ENCODE measurements at regions of chr1 and their contacts with region 1.

Region 1: GRCh38 chr1:167066333-167067122 is 23.6 kb downstream of the GPA33 start:
- DNase-seq: peak; percentile 59 to 92 (median 80)
- ATAC-seq: peak; percentile 99
- H3K4me3 ChIP-seq: peak overlapping the region in 1 of 2 experiments; percentile 27
- H3K4me3 Mint-ChIP-seq: no peak overlapping the region
- H3K27ac ChIP-seq: no peak overlapping the region
- H3K27ac Mint-ChIP-seq: no peak overlapping the region
- H3K4me1 ChIP-seq: no peaks in the 10 kb centered on the region
- H3K4me1 Mint-ChIP-seq: no peaks in the 10 kb centered on the region
- H3K27me3 ChIP-seq: no peaks in the 10 kb centered on the region
- H3K27me3 Mint-ChIP-seq: no peaks in the 10 kb centered on the region
- CTCF ChIP-seq: peak; percentile 96

Region 2: DNA sequence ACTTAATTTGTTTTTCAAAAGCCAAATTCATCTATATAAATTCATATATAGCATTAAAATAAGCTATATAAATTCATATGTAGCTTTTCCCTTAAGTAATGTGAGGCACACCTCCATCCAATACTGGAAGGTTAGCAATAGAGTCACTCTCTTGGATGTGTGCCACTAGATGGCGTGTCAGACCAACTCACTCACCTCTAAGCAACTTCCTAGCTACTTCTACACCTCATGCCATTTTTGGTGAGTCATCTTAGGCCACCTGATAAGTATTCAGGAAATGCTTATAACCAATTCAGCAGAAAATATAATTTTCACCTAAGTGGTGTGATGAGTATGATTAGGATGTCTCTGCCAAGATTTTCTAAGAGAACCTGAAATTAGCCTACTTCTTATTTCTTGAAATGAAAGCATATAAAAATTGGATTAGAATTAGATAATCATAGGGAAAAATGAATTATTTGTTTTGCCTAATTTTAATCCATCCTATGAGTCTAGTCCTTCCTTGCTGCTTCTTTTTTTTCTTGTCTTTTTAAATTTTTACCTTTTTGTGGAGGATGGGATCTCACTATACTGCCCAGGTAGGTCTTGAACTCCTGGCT is 156.0 kb before region 1 on chr1:
- CTCF ChIA-PET with region 1: interaction called, 718 read pairs
- POLR2A ChIA-PET with region 1: interaction called, 27 read pairs
- intact Hi-C with region 1: no loop called
- DNase-seq: peak; percentile 44 to 92 (median 75)
- ATAC-seq: peak; percentile 100
- H3K4me3 ChIP-seq: no peak overlapping the region
- H3K4me3 Mint-ChIP-seq: no peak overlapping the region
- H3K27ac ChIP-seq: no peak overlapping the region
- H3K27ac Mint-ChIP-seq: no peak overlapping the region
- H3K4me1 ChIP-seq: no peaks in the 10 kb centered on the region
- H3K4me1 Mint-ChIP-seq: peaks cover 2% of the 10 kb centered on the region
- H3K27me3 ChIP-seq: no peaks in the 10 kb centered on the region
- H3K27me3 Mint-ChIP-seq: peaks cover 5% of the 10 kb centered on the region
- CTCF ChIP-seq: peak; percentile 87

Region 3: GRCh38 chr1:167093846-167094516 is 27.5 kb after region 1 on chr1 and contains the start of gene STYXL2:
- CTCF ChIA-PET with region 1: interaction called, 10 read pairs
- POLR2A ChIA-PET with region 1: interaction called, 4 read pairs
- intact Hi-C with region 1: no loop called
- DNase-seq: no peak
- ATAC-seq: no peak
- H3K4me3 ChIP-seq: no peak within 1 kb of the TSS
- H3K4me3 Mint-ChIP-seq: no peak within 1 kb of the TSS
- H3K27ac ChIP-seq: no peak within 1 kb of the TSS
- H3K27ac Mint-ChIP-seq: no peak within 1 kb of the TSS
- H3K4me1 ChIP-seq: peaks cover 23% of the 10 kb centered on the region
- H3K4me1 Mint-ChIP-seq: peaks cover 41% of the 10 kb centered on the region
- H3K27me3 ChIP-seq: no peaks in the 10 kb centered on the region
- H3K27me3 Mint-ChIP-seq: peaks cover 2% of the 10 kb centered on the region
- CTCF ChIP-seq: no peak
- total RNA-seq, gene STYXL2: not detected

Region 4: DNA sequence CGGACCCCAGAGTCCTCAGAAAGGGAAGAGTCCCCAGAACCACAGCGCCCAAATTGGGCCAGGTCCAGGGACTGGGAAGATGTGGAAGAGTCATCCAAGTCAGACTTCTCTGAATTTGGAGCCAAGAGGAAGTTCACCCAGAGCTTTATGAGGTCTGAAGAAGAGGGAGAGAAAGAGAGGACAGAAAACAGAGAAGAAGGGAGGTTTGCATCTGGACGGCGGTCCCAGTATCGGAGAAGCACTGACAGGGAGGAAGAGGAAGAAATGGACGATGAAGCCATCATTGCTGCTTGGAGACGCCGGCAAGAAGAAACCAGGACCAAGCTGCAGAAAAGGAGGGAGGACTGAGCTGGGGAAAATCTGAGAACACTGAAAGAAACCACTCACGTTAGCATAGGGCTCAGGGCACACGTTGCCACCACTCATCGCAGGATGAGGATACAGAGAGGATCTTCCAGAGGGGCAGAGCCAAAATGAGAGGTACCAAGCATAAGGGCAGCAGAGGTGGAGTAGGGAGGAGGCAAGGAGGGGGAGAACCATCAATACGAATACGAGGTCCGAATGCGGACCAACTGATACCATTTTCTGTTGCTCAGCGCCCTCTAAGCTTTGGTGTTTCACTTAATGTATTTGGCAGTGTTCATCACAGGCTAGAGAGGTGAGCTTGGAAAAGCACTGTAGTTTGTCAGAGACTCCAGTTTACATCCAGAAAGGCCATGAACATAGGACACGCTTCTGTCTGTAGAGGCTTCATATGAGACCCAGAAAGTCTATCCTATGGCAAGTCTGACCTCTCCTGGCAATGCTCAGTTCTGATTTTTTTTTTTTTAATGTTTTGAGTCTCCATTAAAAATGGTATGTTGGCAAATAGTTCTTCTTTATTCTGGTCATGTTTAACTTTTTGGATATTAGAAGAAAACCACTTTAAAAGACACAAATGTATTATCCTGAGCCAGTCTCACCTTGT is 62.0 kb after region 1 on chr1:
- CTCF ChIA-PET with region 1: interaction called, 436 read pairs
- POLR2A ChIA-PET with region 1: no interaction called
- intact Hi-C with region 1: loop called (anchors 1 kb)
- DNase-seq: peak in 2 of 9 experiments; percentile 32 to 46
- ATAC-seq: peak; percentile 36
- H3K4me3 ChIP-seq: no peak overlapping the region
- H3K4me3 Mint-ChIP-seq: no peak overlapping the region
- H3K27ac ChIP-seq: no peak overlapping the region
- H3K27ac Mint-ChIP-seq: no peak overlapping the region
- H3K4me1 ChIP-seq: no peaks in the 10 kb centered on the region
- H3K4me1 Mint-ChIP-seq: no peaks in the 10 kb centered on the region
- H3K27me3 ChIP-seq: peaks cover 0 to 2% of the 10 kb centered on the region in 2 experiments
- H3K27me3 Mint-ChIP-seq: peaks cover 18% of the 10 kb centered on the region
- CTCF ChIP-seq: peak; percentile 41

Region 5: DNA sequence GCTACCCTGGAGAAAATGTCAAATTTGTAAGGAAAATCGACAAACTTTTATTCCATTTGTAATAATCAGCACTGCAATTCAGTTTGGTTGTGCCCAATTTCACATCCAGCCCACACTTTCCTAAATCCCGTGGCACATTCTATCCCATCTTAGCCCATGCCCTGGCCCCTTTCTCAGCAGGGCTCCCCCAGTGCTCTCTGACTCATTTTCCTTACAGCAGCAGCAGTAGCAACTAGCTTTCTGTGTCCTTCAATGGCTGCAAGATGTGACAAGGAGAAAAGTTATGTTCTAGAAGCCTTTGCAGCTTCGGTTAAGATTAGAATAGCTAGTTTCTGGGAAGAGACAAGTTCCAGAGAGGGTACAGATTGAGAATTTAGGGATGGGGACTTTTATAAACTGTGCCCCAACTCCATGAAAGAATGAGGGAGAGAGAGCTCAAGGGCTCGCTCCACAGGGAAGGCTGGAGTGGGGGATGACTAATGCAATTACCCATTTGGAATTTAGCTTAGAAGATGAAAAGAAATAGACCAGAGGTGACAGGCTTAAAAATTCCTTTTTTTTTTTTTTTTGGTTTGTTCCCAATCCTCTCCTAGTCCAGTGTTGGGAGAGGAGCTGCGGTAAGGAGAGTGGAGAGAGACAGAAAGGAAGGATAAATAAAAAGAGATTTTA is 107.1 kb after region 1 on chr1:
- CTCF ChIA-PET with region 1: no interaction called
- POLR2A ChIA-PET with region 1: no interaction called
- intact Hi-C with region 1: no loop called
- DNase-seq: no peak
- ATAC-seq: no peak
- H3K4me3 ChIP-seq: no peak overlapping the region
- H3K4me3 Mint-ChIP-seq: no peak overlapping the region
- H3K27ac ChIP-seq: no peak overlapping the region
- H3K27ac Mint-ChIP-seq: no peak overlapping the region
- H3K4me1 ChIP-seq: no peaks in the 10 kb centered on the region
- H3K4me1 Mint-ChIP-seq: no peaks in the 10 kb centered on the region
- H3K27me3 ChIP-seq: peaks cover 0 to 2% of the 10 kb centered on the region in 2 experiments
- H3K27me3 Mint-ChIP-seq: peaks cover 5% of the 10 kb centered on the region
- CTCF ChIP-seq: no peak

Region 6: GRCh38 chr1:167342846-167343245 is 276.3 kb after region 1 on chr1:
- CTCF ChIA-PET with region 1: no interaction called
- POLR2A ChIA-PET with region 1: no interaction called
- intact Hi-C with region 1: loop called in 1 of 2 experiments (anchors 2 kb)
- DNase-seq: peak in 2 of 9 experiments; percentile 11 to 30
- ATAC-seq: peak; percentile 31
- H3K4me3 ChIP-seq: no peak overlapping the region
- H3K4me3 Mint-ChIP-seq: no peak overlapping the region
- H3K27ac ChIP-seq: no peak overlapping the region
- H3K27ac Mint-ChIP-seq: no peak overlapping the region
- H3K4me1 ChIP-seq: no peaks in the 10 kb centered on the region
- H3K4me1 Mint-ChIP-seq: peaks cover 4% of the 10 kb centered on the region
- H3K27me3 ChIP-seq: no peaks in the 10 kb centered on the region
- H3K27me3 Mint-ChIP-seq: no peaks in the 10 kb centered on the region
- CTCF ChIP-seq: no peak

Region 7: GRCh38 chr1:167409183-167409582 is 342.7 kb after region 1 on chr1:
- CTCF ChIA-PET with region 1: no interaction called
- POLR2A ChIA-PET with region 1: no interaction called
- intact Hi-C with region 1: loop called (anchors 1 to 2 kb)
- DNase-seq: peak in 1 of 9 experiments; percentile 36
- ATAC-seq: peak; percentile 57
- H3K4me3 ChIP-seq: no peak overlapping the region
- H3K4me3 Mint-ChIP-seq: no peak overlapping the region
- H3K27ac ChIP-seq: no peak overlapping the region
- H3K27ac Mint-ChIP-seq: no peak overlapping the region
- H3K4me1 ChIP-seq: no peaks in the 10 kb centered on the region
- H3K4me1 Mint-ChIP-seq: peaks cover 3% of the 10 kb centered on the region
- H3K27me3 ChIP-seq: no peaks in the 10 kb centered on the region
- H3K27me3 Mint-ChIP-seq: no peaks in the 10 kb centered on the region
- CTCF ChIP-seq: no peak

Region 8: GRCh38 chr1:167542109-167543032 is 475.8 kb after region 1 on chr1:
- CTCF ChIA-PET with region 1: interaction called, 4 read pairs
- POLR2A ChIA-PET with region 1: no interaction called
- intact Hi-C with region 1: loop called (anchors 2 kb)
- DNase-seq: no peak
- ATAC-seq: no peak
- H3K4me3 ChIP-seq: no peak overlapping the region
- H3K4me3 Mint-ChIP-seq: no peak overlapping the region
- H3K27ac ChIP-seq: no peak overlapping the region
- H3K27ac Mint-ChIP-seq: no peak overlapping the region
- H3K4me1 ChIP-seq: no peaks in the 10 kb centered on the region
- H3K4me1 Mint-ChIP-seq: peaks cover 10% of the 10 kb centered on the region
- H3K27me3 ChIP-seq: no peaks in the 10 kb centered on the region
- H3K27me3 Mint-ChIP-seq: no peaks in the 10 kb centered on the region
- CTCF ChIP-seq: no peak

Region 9: GRCh38 chr1:168879916-168880734 is 1813.6 kb after region 1 on chr1:
- CTCF ChIA-PET with region 1: no interaction called
- POLR2A ChIA-PET with region 1: no interaction called
- intact Hi-C with region 1: no loop called
- DNase-seq: no peak
- ATAC-seq: no peak
- H3K4me3 ChIP-seq: no peak overlapping the region
- H3K4me3 Mint-ChIP-seq: no peak overlapping the region
- H3K27ac ChIP-seq: no peak overlapping the region
- H3K27ac Mint-ChIP-seq: no peak overlapping the region
- H3K4me1 ChIP-seq: no peaks in the 10 kb centered on the region
- H3K4me1 Mint-ChIP-seq: peaks cover 3% of the 10 kb centered on the region
- H3K27me3 ChIP-seq: no peaks in the 10 kb centered on the region
- H3K27me3 Mint-ChIP-seq: peaks cover 2% of the 10 kb centered on the region
- CTCF ChIP-seq: no peak